Colonic mucosa (tissue), 4 donors: ENCODE measurements at regions of chr1 and their contacts with region 1.

Region 1: GRCh38 chr1:9494929-9495758 is 44.1 kb upstream of the SLC25A33 start:
- DNase-seq: peak; percentile 44
- H3K4me3 ChIP-seq: peak overlapping the region; percentile 13
- H3K27ac ChIP-seq: no peak overlapping the region
- H3K4me1 ChIP-seq: peaks cover 5% of the 10 kb centered on the region
- H3K27me3 ChIP-seq: no peaks in the 10 kb centered on the region
- CTCF ChIP-seq: peak; percentile 99

Region 2: DNA sequence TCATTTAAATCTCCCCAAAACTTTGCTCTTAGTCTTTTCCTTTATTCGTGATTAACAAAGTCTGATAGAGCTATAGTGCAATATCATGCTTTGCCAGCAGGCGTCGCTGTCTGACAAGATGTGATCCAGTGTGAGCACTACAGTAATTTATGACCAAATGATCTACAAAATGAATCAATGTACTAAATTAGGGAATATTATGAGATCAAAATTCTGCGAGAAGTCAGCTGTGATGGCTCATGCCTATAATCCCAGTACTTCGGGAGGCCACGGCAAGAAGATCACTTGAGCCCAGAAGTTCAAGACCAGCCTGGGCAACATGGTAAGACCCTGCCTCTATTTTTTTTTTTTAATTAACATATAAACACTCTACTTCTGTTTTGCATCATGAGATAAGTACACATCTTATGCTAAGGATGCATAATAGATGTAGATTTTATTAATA is 206.0 kb before region 1 on chr1:
- intact Hi-C with region 1: loop called (anchors 2 kb)
- DNase-seq: peak; percentile 90
- H3K4me3 ChIP-seq: no peak overlapping the region
- H3K27ac ChIP-seq: no peak overlapping the region
- H3K4me1 ChIP-seq: no peaks in the 10 kb centered on the region
- H3K27me3 ChIP-seq: no peaks in the 10 kb centered on the region
- CTCF ChIP-seq: peak; percentile 87

Region 3: DNA sequence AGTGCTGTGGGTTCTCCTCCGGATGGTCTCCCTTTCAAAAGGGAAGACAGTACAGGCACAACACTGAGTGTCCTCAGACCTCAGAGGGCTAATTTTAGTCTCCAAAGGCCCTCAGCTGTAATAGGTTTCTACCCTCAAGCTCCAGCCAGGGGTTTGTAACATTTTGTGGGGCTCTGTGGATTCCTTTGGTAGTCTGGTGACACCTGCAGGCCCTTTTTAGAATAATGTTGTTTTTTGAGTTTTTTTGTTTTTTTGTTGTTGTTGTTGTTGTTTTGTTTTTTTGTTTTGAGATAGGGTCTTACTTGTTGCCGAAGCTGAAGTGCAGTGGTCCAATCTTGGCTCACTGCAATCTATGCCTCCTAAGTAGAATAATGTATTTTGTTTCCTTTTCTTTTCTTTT is 78.6 kb after region 1 on chr1:
- intact Hi-C with region 1: loop called (anchors 5 kb)
- DNase-seq: no peak
- H3K4me3 ChIP-seq: no peak overlapping the region
- H3K27ac ChIP-seq: no peak overlapping the region
- H3K4me1 ChIP-seq: no peaks in the 10 kb centered on the region
- H3K27me3 ChIP-seq: no peaks in the 10 kb centered on the region
- CTCF ChIP-seq: no peak